Common myeloid progenitor, CD34-positive (primary cell): ENCODE measurements at regions of chr2 and their contacts with region 1.

Region 1: GRCh38 chr2:26982102-26982742 is 11.8 kb downstream of the MAPRE3 start:
- DNase-seq: peak; percentile 76 to 86 (median 85)
- H3K4me3 ChIP-seq: no peak overlapping the region
- H3K27ac ChIP-seq: no peak overlapping the region
- H3K4me1 ChIP-seq: peaks cover 0 to 22% (median 6%) of the 10 kb centered on the region in 4 experiments
- H3K27me3 ChIP-seq: peaks cover 0 to 3% (median 0%) of the 10 kb centered on the region in 5 experiments

Region 2: DNA sequence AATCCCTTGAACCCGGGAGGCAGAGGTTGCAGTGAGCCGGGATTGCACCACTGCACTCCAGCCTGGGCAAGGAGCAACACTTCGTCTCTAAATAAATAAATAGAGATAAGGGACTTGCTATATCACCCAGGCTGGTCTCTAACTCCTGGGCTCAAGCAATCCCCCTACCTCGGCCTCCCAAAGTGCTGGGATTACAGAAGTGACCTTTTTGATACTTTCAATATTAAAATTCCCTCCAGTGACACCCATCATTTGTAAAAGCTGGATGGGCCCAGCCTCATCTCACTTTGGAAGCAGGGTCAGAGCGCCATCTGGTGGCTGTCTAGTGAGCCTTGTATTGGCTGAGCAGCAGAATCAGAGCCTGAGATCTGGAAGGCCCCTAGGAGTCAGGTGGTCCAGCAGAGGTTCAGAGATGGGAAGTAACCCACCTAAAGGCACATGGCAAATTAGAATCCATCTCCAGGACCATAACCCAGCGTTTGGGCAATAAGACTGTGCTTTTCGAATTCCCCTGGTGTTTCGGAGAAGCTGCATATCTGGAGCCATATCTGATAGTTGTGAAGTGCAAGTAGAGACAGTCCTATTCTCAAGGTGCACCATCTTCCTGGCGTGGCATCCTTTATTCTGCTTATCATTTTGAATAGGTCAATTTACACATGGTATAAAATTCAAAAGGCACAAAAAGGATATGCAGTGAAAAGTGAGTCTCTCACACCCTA is 236.5 kb before region 1 on chr2:
- CTCF ChIA-PET with region 1: no interaction called
- POLR2A ChIA-PET with region 1: no interaction called
- DNase-seq: peak; percentile 83 to 91 (median 87)
- H3K4me3 ChIP-seq: no peak overlapping the region
- H3K27ac ChIP-seq: no peak overlapping the region
- H3K4me1 ChIP-seq: peaks cover 0 to 22% (median 20%) of the 10 kb centered on the region in 4 experiments
- H3K27me3 ChIP-seq: peaks cover 0 to 8% (median 4%) of the 10 kb centered on the region in 5 experiments

Region 3: GRCh38 chr2:26959331-26959730 is 22.9 kb before region 1 on chr2:
- CTCF ChIA-PET with region 1: interaction called, 10 read pairs
- POLR2A ChIA-PET with region 1: no interaction called
- DNase-seq: peak in 2 of 3 donors; percentile 26 to 32
- H3K4me3 ChIP-seq: no peak overlapping the region
- H3K27ac ChIP-seq: no peak overlapping the region
- H3K4me1 ChIP-seq: peaks cover 0 to 7% (median 6%) of the 10 kb centered on the region in 4 experiments
- H3K27me3 ChIP-seq: peaks cover 0 to 8% (median 0%) of the 10 kb centered on the region in 5 experiments

Region 4: DNA sequence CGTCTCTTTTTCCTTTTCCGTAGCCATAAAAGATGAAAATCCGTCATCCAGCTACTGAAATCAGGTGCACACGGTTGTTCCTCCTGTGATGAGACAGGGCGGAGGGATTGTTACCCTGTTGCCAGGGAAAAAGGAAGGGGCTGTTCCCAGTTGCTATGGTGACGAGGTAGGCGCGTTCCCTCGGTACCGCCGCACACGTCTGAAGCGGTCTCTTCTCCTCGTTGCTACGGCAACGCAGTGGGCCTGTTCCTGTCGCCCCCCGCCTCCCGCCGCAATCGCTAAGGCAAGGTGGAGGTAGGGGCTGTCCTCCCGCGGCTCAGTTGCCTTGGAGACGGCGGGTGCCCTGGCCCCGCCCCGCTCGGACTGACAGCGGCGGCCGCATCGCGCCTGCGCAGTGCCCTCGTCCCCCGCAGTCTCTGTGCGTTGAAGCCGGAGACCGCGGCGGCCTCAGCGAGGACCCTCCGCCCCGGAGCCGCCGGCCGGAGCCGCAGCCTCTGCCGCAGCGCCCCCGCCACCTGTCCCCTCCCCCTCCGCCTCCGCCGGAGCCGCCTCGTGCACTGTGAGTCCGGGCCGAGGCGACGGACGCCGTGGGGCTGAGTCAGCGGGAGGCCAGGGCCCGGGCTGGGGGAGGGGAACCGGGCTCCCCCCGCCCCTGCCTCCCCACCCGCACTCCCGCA is 11.8 kb before region 1 on chr2 and contains the start of gene MAPRE3:
- CTCF ChIA-PET with region 1: interaction called, 25 read pairs
- POLR2A ChIA-PET with region 1: interaction called, 4 read pairs
- DNase-seq: peak; percentile 86 to 95 (median 93)
- H3K4me3 ChIP-seq: peak within 1 kb of the TSS; percentile 4 to 78 (median 64)
- H3K27ac ChIP-seq: peak within 1 kb of the TSS in 1 of 2 experiments; percentile 31
- H3K4me1 ChIP-seq: peaks cover 0 to 25% (median 17%) of the 10 kb centered on the region in 4 experiments
- H3K27me3 ChIP-seq: peaks cover 0 to 32% (median 0%) of the 10 kb centered on the region in 5 experiments

Region 5: GRCh38 chr2:26993768-26994167 is 11.5 kb after region 1 on chr2:
- CTCF ChIA-PET with region 1: interaction called, 39 read pairs
- POLR2A ChIA-PET with region 1: interaction called, 4 read pairs
- DNase-seq: peak in 2 of 3 donors; percentile 44 to 46
- H3K4me3 ChIP-seq: no peak overlapping the region
- H3K27ac ChIP-seq: no peak overlapping the region
- H3K4me1 ChIP-seq: no peaks in the 10 kb centered on the region
- H3K27me3 ChIP-seq: peaks cover 0 to 4% (median 0%) of the 10 kb centered on the region in 5 experiments

Region 6: DNA sequence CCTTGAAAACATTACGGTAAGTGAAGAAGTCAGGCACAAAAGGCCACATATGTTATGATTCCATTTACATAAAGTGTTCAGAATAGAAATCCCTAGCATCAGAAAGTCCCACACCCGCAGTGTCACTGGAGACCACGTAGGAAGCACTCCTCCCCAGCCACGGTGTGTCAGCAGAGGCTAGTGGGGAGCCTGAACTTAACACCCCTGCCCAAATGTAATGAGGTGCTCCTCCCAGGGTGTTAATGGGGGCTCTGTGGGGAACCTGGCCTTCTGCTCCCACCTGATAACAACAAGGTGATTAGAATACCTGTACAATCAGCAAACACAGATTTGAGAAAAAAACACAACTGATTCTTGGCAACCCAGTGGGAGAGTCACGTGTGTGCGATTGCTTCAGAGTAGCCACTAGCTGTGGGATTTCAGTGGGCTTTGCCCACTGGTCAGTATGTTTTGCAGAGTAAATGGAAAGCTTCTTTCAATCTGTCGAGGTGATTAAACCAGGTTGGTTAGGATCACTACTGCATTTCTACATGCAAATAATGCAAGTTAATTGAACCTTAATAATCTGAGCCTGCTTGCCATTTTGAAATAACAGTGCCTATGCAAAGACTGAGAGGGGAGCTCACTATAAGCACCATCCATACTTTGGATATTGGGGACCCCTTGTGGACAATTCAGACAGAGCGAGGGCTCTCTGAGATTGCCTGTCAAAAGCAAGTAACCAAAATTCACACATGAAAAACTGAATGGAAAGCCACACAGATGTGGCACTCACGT is 209.0 kb after region 1 on chr2:
- CTCF ChIA-PET with region 1: no interaction called
- POLR2A ChIA-PET with region 1: no interaction called
- DNase-seq: peak; percentile 77 to 86 (median 81)
- H3K4me3 ChIP-seq: no peak overlapping the region
- H3K27ac ChIP-seq: no peak overlapping the region
- H3K4me1 ChIP-seq: no peaks in the 10 kb centered on the region
- H3K27me3 ChIP-seq: no peaks in the 10 kb centered on the region